AG04450 (cell line): ENCODE measurements at regions of chr11 and their contacts with region 1.

Region 1: DNA sequence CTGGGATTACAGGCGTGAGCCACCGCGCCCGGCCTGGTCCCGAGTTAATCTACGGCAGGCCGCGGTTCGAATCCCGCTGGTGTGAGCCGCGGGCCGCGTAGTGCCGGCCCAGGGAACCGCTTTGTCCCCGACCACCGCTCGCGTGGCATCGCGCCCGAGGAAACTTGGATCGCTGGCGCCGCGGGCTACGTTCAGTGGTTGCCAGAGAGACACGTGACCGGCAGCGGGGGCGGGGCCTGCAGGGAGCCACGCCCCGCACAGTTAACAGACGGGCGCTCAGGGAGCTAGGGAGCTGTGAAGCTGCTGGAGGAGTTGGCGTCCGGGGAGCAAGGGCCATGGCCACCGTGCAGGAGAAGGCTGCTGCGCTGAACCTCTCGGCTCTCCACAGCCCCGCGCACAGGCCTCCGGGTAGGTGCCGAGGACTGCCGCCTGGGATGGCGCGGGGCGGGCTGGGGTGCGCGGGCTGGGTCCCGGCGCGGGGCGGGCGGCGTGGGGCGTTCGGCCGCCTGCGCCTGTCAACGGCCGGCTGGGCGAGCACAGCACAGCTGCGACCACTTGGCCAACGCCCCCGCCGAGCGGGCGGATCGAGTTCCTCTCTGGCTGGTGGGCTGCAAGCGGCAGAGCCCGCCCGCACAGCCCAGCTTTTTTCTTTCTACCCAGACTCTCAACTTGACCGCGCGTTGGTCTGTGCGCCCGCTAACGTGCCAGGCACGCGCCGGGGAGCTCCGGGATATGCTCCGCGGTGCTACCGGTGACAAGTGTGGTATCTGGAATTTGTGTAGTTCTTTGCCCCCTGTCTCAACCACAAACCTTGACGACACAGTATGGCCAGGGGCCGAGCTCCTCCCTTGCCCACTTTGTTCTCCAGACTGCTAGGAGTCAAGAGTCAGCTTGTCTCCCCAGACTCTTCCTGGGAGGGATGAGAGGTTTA is at the start of gene DEPDC7:
- DNase-seq: peak; percentile 67
- H3K4me3 ChIP-seq: peak within 1 kb of the TSS; percentile 77
- H3K27ac ChIP-seq: peak within 1 kb of the TSS; percentile 71
- H3K27me3 ChIP-seq: no peaks in the 10 kb centered on the region
- CTCF ChIP-seq: no peak
- polyA plus RNA-seq, gene DEPDC7: 13.5 and 17.8 TPM in 2 replicates

Region 2: DNA sequence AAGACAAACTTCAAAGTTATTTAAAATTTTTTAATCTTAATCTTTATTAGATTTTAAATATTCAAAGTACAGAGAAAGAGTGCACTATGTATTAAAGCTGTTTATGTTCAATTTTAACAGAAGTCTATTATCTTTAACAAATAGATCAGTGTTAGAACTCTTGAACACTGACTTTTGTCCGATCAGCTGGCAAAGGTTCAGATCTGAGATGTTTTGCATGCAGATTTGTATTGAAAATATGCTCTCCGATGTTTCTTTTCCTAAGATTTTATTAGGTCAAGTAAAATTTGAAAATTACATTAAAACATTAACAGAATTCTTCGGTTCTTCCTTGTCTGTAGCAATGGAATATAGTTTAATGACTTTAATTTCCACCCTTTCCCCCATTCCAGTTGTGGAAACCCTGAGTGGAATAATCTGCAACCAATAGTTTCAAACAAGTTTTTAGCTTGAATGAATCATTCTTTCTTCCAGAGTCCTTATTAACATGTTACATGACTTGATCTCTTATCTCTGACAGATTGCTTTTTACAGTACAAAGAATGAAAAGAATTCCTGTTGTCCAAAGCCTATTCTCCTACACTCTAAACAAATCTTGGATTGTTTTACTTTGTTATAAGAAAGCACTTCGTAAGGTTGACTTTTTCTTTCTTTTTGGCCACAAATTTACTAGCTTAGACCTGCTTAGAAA is 12.1 kb after region 1 on chr11:
- CTCF ChIA-PET with region 1: interaction called, 3 read pairs
- POLR2A ChIA-PET with region 1: interaction called, 13 read pairs
- DNase-seq: no peak
- H3K4me3 ChIP-seq: no peak overlapping the region
- H3K27ac ChIP-seq: no peak overlapping the region
- H3K27me3 ChIP-seq: no peaks in the 10 kb centered on the region
- CTCF ChIP-seq: no peak

Region 3: DNA sequence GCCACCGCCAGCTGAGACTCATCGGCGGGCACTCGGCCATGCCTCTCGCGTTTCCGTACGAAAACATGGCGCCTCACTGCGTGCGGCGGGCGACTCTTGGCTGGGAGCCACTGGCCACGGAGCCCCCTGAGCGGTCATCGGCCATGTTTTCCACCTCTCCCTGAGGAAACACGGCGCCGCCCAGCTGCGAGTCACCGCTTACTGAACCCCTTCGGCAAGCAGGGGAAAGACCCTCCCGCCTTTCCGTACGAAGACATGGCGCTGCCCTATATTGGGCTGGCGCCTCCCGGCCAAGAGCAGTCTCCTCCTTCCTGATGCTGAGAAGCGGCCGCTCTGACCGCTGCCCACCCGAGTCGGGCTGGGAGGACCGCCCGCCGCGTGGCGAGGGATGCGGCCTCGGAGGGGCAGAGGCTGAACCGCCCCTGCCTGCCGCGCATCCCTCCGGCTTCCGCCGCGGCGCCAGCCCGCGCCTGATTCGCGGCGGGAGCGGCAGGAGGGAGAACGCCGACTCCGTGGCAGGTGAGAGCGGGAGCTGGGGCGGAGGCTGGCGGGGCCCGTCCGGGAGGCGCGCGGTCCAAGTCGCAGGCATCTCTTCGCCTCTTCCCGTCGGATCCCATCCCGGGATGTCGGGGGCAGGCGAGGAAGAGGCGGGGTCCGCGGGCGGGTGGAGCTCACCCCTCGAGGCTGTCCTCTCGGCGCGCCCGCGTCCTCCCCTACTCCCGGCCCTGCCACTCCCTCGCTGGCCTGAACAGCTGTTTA is 23.6 kb after region 1 on chr11 and contains the start of gene TCP11L1:
- CTCF ChIA-PET with region 1: interaction called, 4 read pairs
- POLR2A ChIA-PET with region 1: interaction called, 19 read pairs
- DNase-seq: peak; percentile 90
- H3K4me3 ChIP-seq: peak within 1 kb of the TSS; percentile 82
- H3K27ac ChIP-seq: peak within 1 kb of the TSS; percentile 99
- H3K27me3 ChIP-seq: no peaks in the 10 kb centered on the region
- CTCF ChIP-seq: no peak
- polyA plus RNA-seq, gene TCP11L1: 18.7 and 21.4 TPM in 2 replicates